Cardiac septum (tissue), 1 donor: ENCODE measurements at regions of chr5 and their contacts with region 1.

Region 1: DNA sequence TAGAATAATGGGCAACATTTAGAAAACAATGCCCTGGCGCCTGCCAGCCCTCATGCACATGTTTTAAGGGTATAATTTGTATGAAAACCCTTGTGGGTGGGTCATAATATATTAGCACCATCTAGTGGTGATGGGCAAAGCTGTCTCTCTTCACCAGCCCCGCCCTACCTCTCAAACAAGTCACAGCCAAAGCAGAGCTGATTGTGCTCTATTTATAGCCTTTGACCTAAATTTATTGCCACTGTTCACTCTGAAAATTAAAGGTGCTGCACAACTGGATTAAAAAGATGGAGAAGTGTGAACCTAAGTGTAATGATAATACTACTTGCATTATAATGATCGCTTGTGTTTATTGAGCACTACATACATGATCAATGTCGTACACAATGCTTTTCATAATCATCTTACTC is 131.9 kb upstream of the ANKH start:
- DNase-seq: no peak

Region 2: GRCh38 chr5:14664302-14665100 is 339.0 kb before region 1 on chr5 and contains the start of gene OTULIN:
- intact Hi-C with region 1: no loop called
- DNase-seq: peak; percentile 96
- total RNA-seq, gene OTULIN: 29.0 TPM

Region 3: GRCh38 chr5:14685757-14686156 is 317.8 kb before region 1 on chr5:
- intact Hi-C with region 1: loop called (anchors 2 kb)
- DNase-seq: no peak

Region 4: GRCh38 chr5:14727428-14727865 is 276.1 kb before region 1 on chr5:
- intact Hi-C with region 1: loop called (anchors 1 kb)
- DNase-seq: no peak

Region 5: GRCh38 chr5:14937254-14937653 is 66.3 kb before region 1 on chr5:
- intact Hi-C with region 1: loop called (anchors 5 kb)
- DNase-seq: no peak

Region 6: GRCh38 chr5:15056988-15057592 is 53.6 kb after region 1 on chr5:
- intact Hi-C with region 1: no loop called
- DNase-seq: no peak